ENCODE measurements at regions of chr2 and their contacts with region 1.

Region 1: GRCh38 chr2:96174251-96175144 is 29.3 kb upstream of the DUSP2 start:
- DNase-seq: peak; percentile 85
- H3K4me3 ChIP-seq: no peak overlapping the region; a peak in 1 of 4 replicates
- H3K27ac ChIP-seq: no peak overlapping the region
- H3K4me1 ChIP-seq: peaks cover 2 to 4% of the 10 kb centered on the region in 2 experiments; a peak in 3 of 4 replicates
- H3K27me3 ChIP-seq: no peaks in the 10 kb centered on the region
- CTCF ChIP-seq: peak; percentile 91
- EP300 ChIP-seq: no peak
- RAD21 ChIP-seq: peak; percentile 98

Region 2: DNA sequence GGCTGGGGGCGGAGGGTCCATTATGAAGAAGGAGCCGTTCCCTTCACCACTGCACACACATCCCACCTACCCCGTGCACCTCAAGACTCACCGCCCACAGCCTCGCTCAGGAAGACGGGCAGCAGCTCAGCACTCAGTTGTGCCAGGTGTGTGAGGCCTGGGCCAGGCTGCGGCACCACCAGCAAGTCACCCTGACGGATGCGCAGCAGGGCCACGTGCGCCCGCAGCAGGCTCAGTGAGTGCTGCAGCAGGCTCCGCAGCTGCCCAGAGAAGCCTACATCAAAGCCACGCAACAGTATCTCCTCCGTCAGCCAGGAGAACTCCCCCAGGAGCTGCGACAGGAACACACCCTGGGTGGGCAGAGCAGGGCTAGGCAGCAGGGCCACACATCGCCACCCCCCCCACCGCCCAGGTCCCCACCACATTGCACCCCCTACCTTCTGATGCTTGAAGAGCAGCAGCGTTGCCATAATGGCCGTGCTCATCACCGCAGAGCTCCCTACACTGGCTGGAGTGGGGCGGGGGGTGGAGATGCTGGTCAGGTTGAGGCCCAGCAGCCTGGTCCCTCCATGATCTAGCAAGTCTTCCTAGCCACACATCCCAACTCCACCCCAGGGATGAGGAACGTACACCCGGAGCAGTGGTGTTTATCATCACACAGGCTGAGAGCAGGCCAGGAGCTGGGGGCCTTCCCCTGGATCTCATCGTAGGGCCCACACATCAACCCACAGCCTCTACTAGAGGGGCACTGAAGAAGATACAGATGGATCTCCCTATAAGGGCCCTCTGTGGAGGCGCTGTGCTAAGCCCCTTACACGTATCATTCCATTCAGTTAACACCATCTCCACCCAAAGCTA is 149.9 kb before region 1 on chr2:
- CTCF ChIA-PET with region 1: interaction called, 84 read pairs
- POLR2A ChIA-PET with region 1: interaction called, 5 read pairs
- DNase-seq: peak; percentile 19
- H3K4me3 ChIP-seq: no peak overlapping the region
- H3K27ac ChIP-seq: no peak overlapping the region
- H3K4me1 ChIP-seq: no peaks in the 10 kb centered on the region
- H3K27me3 ChIP-seq: no peaks in the 10 kb centered on the region
- CTCF ChIP-seq: no peak
- EP300 ChIP-seq: no peak
- RAD21 ChIP-seq: no peak

Region 3: DNA sequence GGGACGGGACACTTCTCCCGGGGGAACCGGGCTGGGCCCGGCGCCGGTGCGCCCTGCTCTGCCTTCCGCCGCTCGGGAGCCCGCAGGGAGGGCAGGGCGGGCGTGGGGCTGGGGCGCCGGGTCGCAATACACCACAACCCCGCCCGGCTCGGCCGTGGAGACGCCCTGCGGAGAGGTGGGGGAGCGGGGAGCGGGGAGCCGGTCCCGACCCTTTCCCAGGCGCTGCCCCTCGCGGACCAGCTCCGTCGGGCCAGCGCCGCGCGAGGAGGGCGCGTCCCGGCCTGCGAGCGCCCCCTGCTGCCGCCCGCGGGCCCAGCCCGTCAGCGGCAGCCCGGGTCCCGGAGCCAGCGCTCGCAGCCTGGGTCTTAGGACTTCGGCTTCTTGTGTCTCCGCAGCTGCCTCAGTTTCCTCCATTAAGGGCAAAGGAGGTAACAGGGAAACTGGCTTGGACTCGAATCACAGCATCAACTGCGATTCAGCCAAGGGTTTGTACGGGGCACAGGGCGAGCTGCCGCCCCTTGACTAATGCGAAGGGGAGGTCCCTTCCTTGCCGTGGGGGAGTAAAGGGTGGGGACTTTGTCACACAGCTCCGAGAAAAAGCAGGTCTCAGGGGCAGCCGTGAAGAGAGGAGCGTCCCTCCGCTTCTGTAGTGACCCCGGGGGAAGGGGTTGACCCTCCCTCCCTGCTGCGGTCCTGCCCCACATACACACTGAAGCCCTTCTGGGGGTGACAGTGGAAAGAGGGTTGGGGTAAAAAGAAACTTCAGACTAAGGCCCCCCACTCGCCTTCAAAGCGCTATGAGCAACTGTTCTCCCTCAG is 57.4 kb before region 1 on chr2:
- CTCF ChIA-PET with region 1: interaction called, 101 read pairs
- POLR2A ChIA-PET with region 1: interaction called, 3 read pairs
- DNase-seq: peak; percentile 97
- H3K4me3 ChIP-seq: peak overlapping the region; percentile 44 to 54; a peak in 3 of 4 replicates
- H3K27ac ChIP-seq: no peak overlapping the region
- H3K4me1 ChIP-seq: peaks cover 0 to 12% of the 10 kb centered on the region in 2 experiments; a peak in 1 of 4 replicates
- H3K27me3 ChIP-seq: no peaks in the 10 kb centered on the region; the same call in 1 of the 2 replicates
- CTCF ChIP-seq: peak; percentile 71
- EP300 ChIP-seq: no peak
- RAD21 ChIP-seq: peak; percentile 74

Region 4: GRCh38 chr2:96131152-96131812 is 43.2 kb before region 1 on chr2:
- CTCF ChIA-PET with region 1: interaction called, 102 read pairs
- POLR2A ChIA-PET with region 1: interaction called, 6 read pairs
- DNase-seq: no peak
- H3K4me3 ChIP-seq: no peak overlapping the region
- H3K27ac ChIP-seq: no peak overlapping the region
- H3K4me1 ChIP-seq: peaks cover 0 to 4% of the 10 kb centered on the region in 2 experiments; a peak in 1 of 4 replicates
- H3K27me3 ChIP-seq: peaks cover 7% of the 10 kb centered on the region; the same call in 1 of the 2 replicates
- CTCF ChIP-seq: no peak
- EP300 ChIP-seq: no peak
- RAD21 ChIP-seq: no peak

Region 5: GRCh38 chr2:96145036-96145847 is 29.3 kb before region 1 on chr2 and contains the start of gene DUSP2:
- CTCF ChIA-PET with region 1: interaction called, 35 read pairs
- POLR2A ChIA-PET with region 1: no interaction called
- DNase-seq: no peak
- H3K4me3 ChIP-seq: no peak within 1 kb of the TSS; a peak in 1 of 4 replicates
- H3K27ac ChIP-seq: peak within 1 kb of the TSS; percentile 88 to 95
- H3K4me1 ChIP-seq: peaks cover 33 to 58% of the 10 kb centered on the region in 2 experiments
- H3K27me3 ChIP-seq: no peaks in the 10 kb centered on the region
- CTCF ChIP-seq: no peak
- EP300 ChIP-seq: no peak
- RAD21 ChIP-seq: no peak
- polyA plus RNA-seq, gene DUSP2: 0.79 and 1.2 TPM in 2 replicates

Region 6: DNA sequence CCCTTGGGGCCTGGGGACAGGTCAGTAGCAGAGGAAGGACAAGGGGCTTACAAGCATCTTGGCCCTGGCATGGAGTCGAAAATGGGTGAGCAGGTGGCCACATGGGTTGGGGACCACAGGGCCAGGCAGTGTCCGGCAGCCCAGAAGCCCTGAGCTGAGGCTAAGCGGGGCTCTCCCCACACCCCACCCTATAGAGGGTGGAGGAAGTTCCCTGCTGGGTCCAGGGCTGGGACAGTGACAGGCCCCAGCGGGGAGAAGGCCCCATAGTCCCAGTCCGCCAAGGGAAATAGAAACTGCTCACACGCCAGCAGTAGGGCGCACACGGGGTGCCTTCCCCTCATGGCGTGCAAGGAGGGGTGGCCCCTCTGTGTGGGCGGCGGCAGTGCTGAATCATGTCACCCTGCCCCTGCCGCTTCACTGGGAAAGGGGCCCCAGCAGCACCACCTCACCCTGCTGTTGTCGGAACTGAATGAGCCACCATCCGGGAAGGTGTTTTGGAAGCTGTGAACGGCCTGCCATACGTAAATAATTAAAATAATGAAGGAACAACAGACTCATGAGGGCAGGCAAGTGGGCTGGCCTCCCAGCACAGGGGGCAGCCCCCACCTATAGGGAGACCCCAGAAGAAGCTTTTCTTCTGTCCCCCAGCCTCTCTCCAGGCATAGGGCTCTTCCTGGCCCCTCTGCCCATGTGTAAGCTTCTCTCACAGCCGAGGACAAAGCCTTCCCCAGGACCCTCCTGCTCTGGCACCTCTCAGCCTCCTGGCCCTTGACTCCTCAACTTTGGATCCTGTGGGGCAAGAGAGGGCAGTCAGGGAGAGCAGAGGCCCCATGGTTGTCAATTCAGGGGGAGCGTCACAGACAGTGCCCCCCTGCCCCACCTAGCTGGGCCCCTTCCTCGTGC is 16.6 kb before region 1 on chr2:
- CTCF ChIA-PET with region 1: interaction called, 29 read pairs
- POLR2A ChIA-PET with region 1: no interaction called
- DNase-seq: peak; percentile 17
- H3K4me3 ChIP-seq: no peak overlapping the region
- H3K27ac ChIP-seq: no peak overlapping the region
- H3K4me1 ChIP-seq: peaks cover 0 to 3% of the 10 kb centered on the region in 2 experiments; a peak in 1 of 4 replicates
- H3K27me3 ChIP-seq: no peaks in the 10 kb centered on the region
- CTCF ChIP-seq: no peak
- EP300 ChIP-seq: no peak
- RAD21 ChIP-seq: no peak

Region 7: GRCh38 chr2:96204836-96205624 is 30.5 kb after region 1 on chr2:
- CTCF ChIA-PET with region 1: interaction called, 14 read pairs
- POLR2A ChIA-PET with region 1: no interaction called
- DNase-seq: no peak
- H3K4me3 ChIP-seq: no peak overlapping the region
- H3K27ac ChIP-seq: peak overlapping the region; percentile 25 to 37
- H3K4me1 ChIP-seq: peaks cover 25 to 26% of the 10 kb centered on the region in 2 experiments; a peak in 3 of 4 replicates
- H3K27me3 ChIP-seq: no peaks in the 10 kb centered on the region
- CTCF ChIP-seq: no peak
- EP300 ChIP-seq: no peak
- RAD21 ChIP-seq: no peak

Measured in SK-N-SH (cell line).